ENCODE measurements at regions of chr16 and their contacts with region 1.

Region 1: GRCh38 chr16:87278191-87279095 is 38.7 kb downstream of the C16orf95 start:
- DNase-seq: peak; percentile 61 to 91 (median 73)
- H3K4me3 ChIP-seq: no peak overlapping the region
- H3K27ac ChIP-seq: no peak overlapping the region
- H3K27me3 ChIP-seq: peaks cover 0 to 12% (median 0%) of the 10 kb centered on the region in 45 donors
- CTCF ChIP-seq: peak; percentile 59 to 94 (median 86)

Region 2: DNA sequence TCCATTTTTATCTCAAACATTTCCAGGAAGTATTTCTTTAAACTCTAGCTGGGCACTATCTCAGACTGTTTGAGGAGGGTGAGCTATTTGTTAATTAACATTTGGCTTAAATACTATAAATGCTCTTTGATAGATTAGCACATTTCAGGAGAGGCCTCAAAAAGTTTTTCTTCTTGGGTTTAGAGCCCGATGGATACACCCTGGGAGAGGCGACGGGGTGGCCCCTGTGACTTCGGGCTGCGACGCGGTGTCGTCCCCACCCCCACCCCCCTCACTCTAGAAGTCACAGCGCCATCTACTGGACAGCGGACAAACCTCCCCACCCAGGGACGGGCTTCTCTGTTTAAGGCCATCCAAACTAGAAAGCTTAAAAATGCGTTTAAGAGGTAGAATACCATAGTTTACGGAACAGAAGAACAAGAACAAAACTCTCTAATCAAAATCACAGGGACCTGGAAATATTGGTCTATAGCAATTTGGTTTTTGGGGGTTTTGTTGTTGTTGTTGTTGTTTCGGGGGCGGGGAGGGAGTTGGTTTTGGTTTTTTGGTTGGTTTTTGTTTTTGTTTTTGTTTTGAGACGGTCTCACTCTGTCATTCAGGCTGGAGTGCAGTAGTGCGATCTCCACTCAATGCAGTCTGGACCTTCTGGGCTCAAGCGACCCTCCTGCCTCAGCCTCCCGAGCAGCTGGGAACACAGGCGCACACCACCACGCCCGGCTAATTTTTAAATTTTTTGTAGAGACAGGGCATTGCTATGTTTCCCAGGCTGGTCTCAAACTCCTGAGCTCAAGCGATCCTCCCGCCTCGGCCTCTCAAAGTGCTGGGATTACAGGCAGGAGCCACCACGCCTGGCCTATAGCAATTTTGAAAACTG is 215.6 kb before region 1 on chr16:
- intact Hi-C with region 1: loop called in 1 of 2 experiments (anchors 5 kb)
- DNase-seq: peak in 4 of 10 donors; percentile 26 to 61 (median 51)
- H3K4me3 ChIP-seq: peak overlapping the region in 18 of 59 donors; percentile 7 to 45 (median 22)
- H3K27ac ChIP-seq: peak overlapping the region in 2 of 59 donors; percentile 2 to 42
- H3K27me3 ChIP-seq: peaks cover 0 to 11% (median 0%) of the 10 kb centered on the region in 45 donors
- CTCF ChIP-seq: peak; percentile 37 to 88 (median 78)